ENCODE measurements at regions of chrX and their contacts with region 1.

Region 1: GRCh38 chrX:107672955-107673378 is 44.7 kb downstream of the PRPS1 start:
- DNase-seq: peak; percentile 55 to 83 (median 72)
- ATAC-seq: peak; percentile 19 to 52 (median 42)
- H3K4me3 ChIP-seq: no peak overlapping the region
- H3K27ac ChIP-seq: peak overlapping the region; percentile 53 to 98 (median 88)
- H3K4me1 ChIP-seq: peaks cover 0 to 53% (median 19%) of the 10 kb centered on the region in 12 donors
- H3K27me3 ChIP-seq: peaks cover 0 to 11% (median 0%) of the 10 kb centered on the region in 9 donors
- CTCF ChIP-seq: peak; percentile 47 to 66 (median 58)
- POLR2A ChIP-seq: peak in 1 of 2 donors; percentile 25

Region 2: GRCh38 chrX:107710617-107711391 is 37.8 kb after region 1 on chrX:
- intact Hi-C with region 1: loop called in 9 of 10 experiments (anchors 2 to 5 kb)
- DNase-seq: peak in 2 of 5 donors; percentile 34 to 43
- ATAC-seq: peak; percentile 59 to 82 (median 78)
- H3K4me3 ChIP-seq: no peak overlapping the region
- H3K27ac ChIP-seq: peak overlapping the region; percentile 16 to 98 (median 92)
- H3K4me1 ChIP-seq: peaks cover 0 to 53% (median 7%) of the 10 kb centered on the region in 12 donors
- H3K27me3 ChIP-seq: no peaks in the 10 kb centered on the region
- CTCF ChIP-seq: no peak
- POLR2A ChIP-seq: no peak

Region 3: DNA sequence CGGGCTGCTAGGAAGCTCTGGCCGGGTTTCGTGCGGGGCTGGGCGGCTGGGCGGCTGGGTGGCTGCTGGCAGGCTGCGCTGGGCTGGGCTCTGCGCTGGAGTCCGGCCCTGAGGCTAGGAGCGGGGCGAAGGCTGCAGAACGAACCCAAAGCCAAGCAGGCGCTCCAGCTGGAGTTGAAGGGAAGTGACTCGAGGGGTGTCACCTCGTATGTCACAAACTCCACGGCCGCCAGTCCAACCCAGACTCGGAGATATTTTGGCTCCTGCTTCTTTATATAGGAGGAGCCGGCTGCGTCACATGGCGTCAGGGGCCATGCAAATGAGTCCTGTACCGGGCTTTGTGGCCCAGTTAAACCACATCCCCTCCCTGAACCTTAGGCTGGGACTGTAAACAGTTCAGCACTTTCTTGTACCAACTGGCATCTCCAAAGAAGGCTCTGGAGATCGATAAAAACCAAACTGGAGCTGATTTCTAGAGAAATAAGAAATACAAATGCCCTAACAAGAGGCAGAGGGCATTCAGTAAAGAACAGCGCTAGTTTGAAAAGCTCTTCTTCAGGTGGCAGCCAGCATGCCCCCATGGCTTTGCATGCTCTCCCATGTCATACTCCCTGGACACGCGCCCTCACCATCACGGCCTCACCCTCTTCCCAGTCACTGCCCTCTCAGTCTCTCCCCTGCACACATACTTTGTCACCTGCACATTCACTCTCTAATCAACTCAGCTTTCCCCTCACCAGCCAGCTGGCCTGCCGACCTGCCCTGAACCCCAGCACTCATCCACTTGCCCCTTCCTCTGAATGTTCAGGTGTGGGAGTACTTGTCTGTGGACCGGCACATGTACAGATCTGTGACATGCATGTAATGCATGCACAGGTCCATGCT is 44.1 kb after region 1 on chrX:
- intact Hi-C with region 1: loop called (anchors 1 to 5 kb)
- DNase-seq: peak; percentile 87 to 90 (median 88)
- ATAC-seq: peak; percentile 74 to 88 (median 82)
- H3K4me3 ChIP-seq: peak overlapping the region; percentile 46 to 95 (median 75)
- H3K27ac ChIP-seq: peak overlapping the region; percentile 89 to 99 (median 93)
- H3K4me1 ChIP-seq: peaks cover 0 to 60% (median 10%) of the 10 kb centered on the region in 12 donors
- H3K27me3 ChIP-seq: peaks cover 0 to 13% (median 0%) of the 10 kb centered on the region in 9 donors
- CTCF ChIP-seq: no peak
- POLR2A ChIP-seq: peak; percentile 17 to 97